Activated B cell treated with CpG ODN at 0.5 μM for 24 hours (primary cell): ENCODE measurements at regions of chr6 and their contacts with region 1.

Region 1: DNA sequence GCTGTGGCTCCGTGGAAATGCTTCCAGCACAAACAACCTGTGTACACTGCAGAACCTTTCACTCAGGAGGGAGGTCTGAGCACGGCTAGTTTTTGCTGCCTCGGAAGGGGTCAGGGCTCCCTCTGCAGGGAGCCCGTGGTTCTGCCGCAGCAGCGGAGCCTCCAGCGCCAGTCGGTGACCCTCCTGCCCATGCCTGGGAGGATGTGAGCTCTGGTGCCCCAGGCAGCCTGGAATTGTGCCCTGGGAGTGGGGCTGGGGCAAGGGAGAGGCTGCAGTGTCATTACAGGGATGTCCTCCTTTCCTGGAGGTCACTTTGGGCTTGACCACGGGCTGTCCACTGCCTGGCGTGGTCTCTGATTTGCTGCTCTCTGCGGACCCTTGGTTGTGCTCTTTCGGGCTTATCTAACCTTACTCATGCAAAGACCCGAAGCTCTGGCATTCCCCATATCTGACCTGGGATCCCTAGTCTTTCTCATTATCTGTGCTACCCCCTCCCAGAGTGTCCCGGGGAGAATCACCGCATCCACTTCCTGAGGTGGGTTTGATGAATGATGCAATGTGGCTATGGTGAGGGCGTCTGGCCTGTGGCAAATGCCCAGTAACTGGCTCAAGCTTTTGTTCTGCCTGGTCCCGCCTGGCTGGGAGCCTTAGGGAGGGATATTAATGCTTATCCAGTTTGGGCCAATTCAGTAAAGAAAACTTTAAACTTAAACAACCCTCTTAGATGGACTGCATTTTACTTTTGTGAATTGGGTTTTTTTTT is 59.6 kb upstream of the TAGAP start:
- DNase-seq: peak; percentile 76
- ATAC-seq: peak; percentile 50
- H3K4me3 Mint-ChIP-seq: peak overlapping the region; percentile 67
- H3K27ac Mint-ChIP-seq: peak overlapping the region; percentile 98
- H3K4me1 Mint-ChIP-seq: peaks cover 91% of the 10 kb centered on the region
- H3K27me3 Mint-ChIP-seq: no peaks in the 10 kb centered on the region
- CTCF ChIP-seq: no peak

Region 2: DNA sequence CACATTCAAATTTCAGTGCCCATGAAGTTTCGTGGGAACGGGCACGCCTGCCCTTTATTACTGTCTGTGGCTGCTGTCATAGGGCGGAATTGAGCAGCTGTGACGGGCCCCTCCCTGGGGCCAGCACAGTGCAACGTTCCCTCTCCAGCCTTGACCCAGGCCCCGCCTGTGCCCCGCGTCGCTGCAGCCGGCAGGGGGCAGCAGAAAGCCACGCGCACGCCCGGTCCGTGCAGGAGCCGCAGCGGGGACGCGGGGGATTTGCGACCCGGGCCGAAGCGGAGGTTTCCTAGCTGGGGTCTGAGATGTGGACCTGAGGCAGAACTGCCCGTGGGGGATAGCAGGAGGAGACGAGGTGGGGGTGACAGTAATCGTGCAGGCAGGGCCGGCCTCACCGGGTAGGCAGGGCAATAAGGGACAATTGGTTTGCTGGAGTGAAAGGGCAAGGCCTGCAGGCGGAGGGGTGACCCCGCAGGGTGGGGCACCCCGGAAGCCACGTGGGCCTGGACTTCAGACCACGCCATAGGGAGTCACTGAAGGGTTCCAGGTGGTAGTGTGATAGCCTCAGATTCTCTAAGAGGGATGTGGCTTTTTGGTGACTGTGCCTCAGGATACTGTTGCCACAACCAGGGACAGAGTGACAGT is 400.0 kb before region 1 on chr6:
- CTCF ChIA-PET with region 1: no interaction called
- POLR2A ChIA-PET with region 1: interaction called, 11 read pairs
- intact Hi-C with region 1: no loop called
- DNase-seq: peak; percentile 89
- ATAC-seq: peak; percentile 95
- H3K4me3 Mint-ChIP-seq: peak overlapping the region; percentile 86
- H3K27ac Mint-ChIP-seq: peak overlapping the region; percentile 81
- H3K4me1 Mint-ChIP-seq: peaks cover 29% of the 10 kb centered on the region
- H3K27me3 Mint-ChIP-seq: no peaks in the 10 kb centered on the region
- CTCF ChIP-seq: peak; percentile 92

Region 3: DNA sequence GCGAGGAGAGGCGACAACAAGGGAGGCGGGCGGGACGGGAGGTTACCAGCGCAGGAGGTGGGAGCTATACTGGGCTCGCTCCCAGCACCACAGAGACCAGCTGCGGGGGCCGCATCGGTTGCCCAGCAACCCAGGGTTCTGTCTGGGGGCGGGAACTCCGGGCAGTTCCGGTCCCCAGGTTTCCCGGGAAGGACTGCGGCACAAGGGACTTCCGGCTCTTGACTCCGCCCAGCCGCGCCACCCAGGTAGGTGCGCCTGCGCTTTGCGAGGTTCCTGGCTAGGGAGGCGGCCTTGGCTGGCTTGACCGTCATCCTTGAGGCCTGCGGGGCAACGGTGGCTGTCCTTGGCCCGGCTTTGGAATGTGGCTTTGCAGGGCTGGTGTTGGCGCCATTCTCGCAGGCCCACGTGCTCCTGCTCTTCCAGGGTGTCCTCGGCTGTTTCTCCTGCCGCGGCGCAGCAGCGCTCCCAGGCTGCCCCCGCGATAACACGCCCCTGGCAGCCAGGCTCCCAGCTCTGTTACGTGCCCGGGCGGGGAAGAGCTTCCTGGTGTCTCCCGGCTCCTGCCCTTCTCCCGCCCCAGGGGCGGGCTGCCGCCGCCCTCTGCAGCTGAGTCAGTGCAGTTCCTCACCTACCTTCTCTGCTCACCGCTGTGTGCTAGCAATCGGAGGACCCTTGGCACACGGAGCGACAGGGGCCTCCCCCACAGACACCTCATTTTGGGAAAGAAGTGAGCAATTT is 104.5 kb before region 1 on chr6 and contains the start of gene RSPH3:
- CTCF ChIA-PET with region 1: interaction called, 12 read pairs
- POLR2A ChIA-PET with region 1: interaction called, 15 read pairs
- intact Hi-C with region 1: no loop called
- DNase-seq: peak; percentile 87
- ATAC-seq: peak; percentile 90
- H3K4me3 Mint-ChIP-seq: peak within 1 kb of the TSS; percentile 94
- H3K27ac Mint-ChIP-seq: peak within 1 kb of the TSS; percentile 85
- H3K4me1 Mint-ChIP-seq: peaks cover 27% of the 10 kb centered on the region
- H3K27me3 Mint-ChIP-seq: no peaks in the 10 kb centered on the region
- CTCF ChIP-seq: no peak
- total RNA-seq, gene RSPH3: 1.9 and 2.4 TPM in 2 replicates

Region 4: GRCh38 chr6:159056003-159056402 is 48.3 kb before region 1 on chr6:
- CTCF ChIA-PET with region 1: interaction called, 10 read pairs
- POLR2A ChIA-PET with region 1: interaction called, 14 read pairs
- intact Hi-C with region 1: no loop called
- DNase-seq: no peak
- ATAC-seq: peak; percentile 68
- H3K4me3 Mint-ChIP-seq: peak overlapping the region; percentile 70
- H3K27ac Mint-ChIP-seq: peak overlapping the region; percentile 88
- H3K4me1 Mint-ChIP-seq: peaks cover 79% of the 10 kb centered on the region
- H3K27me3 Mint-ChIP-seq: no peaks in the 10 kb centered on the region
- CTCF ChIP-seq: no peak

Region 5: GRCh38 chr6:159084493-159085091 is 19.8 kb before region 1 on chr6:
- CTCF ChIA-PET with region 1: interaction called, 15 read pairs
- POLR2A ChIA-PET with region 1: interaction called, 153 read pairs
- intact Hi-C with region 1: no loop called
- DNase-seq: no peak
- ATAC-seq: no peak
- H3K4me3 Mint-ChIP-seq: no peak overlapping the region
- H3K27ac Mint-ChIP-seq: no peak overlapping the region
- H3K4me1 Mint-ChIP-seq: peaks cover 30% of the 10 kb centered on the region
- H3K27me3 Mint-ChIP-seq: no peaks in the 10 kb centered on the region
- CTCF ChIP-seq: no peak

Region 6: GRCh38 chr6:159125014-159125609 is 20.8 kb after region 1 on chr6:
- CTCF ChIA-PET with region 1: interaction called, 20 read pairs
- POLR2A ChIA-PET with region 1: interaction called, 145 read pairs
- intact Hi-C with region 1: loop called (anchors 1 kb)
- DNase-seq: no peak
- ATAC-seq: no peak
- H3K4me3 Mint-ChIP-seq: no peak overlapping the region
- H3K27ac Mint-ChIP-seq: no peak overlapping the region
- H3K4me1 Mint-ChIP-seq: peaks cover 69% of the 10 kb centered on the region
- H3K27me3 Mint-ChIP-seq: no peaks in the 10 kb centered on the region
- CTCF ChIP-seq: no peak

Region 7: DNA sequence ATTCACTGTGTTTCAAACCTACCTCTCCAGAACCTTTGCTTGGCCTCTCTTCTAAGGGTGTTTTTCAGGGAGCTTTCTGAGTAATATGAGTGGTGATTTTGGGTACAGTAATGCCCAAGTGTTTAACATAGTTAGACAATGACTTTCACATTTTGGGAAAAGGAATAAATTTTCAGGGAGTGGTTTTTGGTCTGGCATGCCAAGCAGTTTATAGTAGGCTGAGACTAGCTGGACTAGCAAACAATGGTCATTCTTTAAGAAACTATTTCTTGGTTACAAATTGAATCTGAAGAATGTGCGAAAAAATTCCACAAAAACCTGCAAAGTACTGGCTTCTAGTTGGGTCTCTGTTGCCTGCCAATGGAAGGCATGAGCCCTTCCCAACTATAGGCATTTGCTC is 80.2 kb after region 1 on chr6:
- CTCF ChIA-PET with region 1: no interaction called
- POLR2A ChIA-PET with region 1: no interaction called
- intact Hi-C with region 1: no loop called
- DNase-seq: no peak
- ATAC-seq: no peak
- H3K4me3 Mint-ChIP-seq: no peak overlapping the region
- H3K27ac Mint-ChIP-seq: no peak overlapping the region
- H3K4me1 Mint-ChIP-seq: peaks cover 2% of the 10 kb centered on the region
- H3K27me3 Mint-ChIP-seq: peaks cover 17% of the 10 kb centered on the region
- CTCF ChIP-seq: no peak